Activated CD8-positive, alpha-beta T cell treated with anti-CD3 and anti-CD28 coated beads, Interleukin-2, amount 10 ng/mL, durations not matched to agents 7 days and 5 days (primary cell): ENCODE measurements at regions of chr20 and their contacts with region 1.

Region 1: DNA sequence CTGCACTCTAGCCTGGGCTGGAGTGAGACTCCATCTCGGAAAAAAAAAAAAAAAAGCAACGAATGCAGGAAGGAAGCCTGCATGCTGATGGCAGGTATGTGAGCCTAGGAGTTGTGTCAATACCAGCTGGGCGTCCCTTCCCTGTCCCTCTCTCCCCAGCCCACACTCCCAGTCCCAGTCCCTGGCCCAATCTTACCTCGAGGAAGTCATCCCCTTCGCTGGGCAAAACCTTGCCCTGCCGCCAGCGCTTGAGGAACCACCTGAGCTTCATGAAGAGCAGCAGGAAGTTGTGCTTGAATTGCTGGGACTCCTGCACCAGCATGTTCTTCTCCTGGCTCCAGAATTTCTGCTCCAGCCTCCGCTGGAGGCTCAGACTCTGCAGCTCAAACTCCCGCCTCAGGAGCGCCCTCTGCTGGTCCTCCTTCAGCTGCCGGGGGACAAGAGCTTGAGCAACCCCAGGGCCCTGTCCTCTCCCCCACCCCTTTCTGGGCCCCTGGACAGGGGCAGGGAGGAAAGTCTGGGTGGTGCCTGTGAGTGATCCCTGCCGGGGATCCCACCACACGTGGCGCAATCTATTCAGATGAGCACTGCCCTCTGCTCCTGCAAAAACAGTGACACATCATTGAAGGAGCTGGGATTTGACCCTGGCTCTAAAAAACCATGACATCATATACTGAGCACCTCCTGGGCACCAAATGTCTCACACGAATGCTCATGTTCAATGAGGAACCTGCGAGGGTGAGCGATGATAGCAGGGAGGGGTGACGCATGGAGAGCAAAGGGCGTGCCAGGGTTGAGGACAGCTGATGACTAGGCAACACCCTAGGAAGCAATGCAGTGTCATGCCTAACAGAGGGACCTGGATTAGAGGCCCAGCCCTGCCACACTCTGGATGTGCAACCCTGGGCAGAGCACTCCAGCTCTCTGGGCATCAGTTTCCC is 35.0 kb upstream of the DSN1 start:
- DNase-seq: peak; percentile 81
- ATAC-seq: peak; percentile 81
- H3K4me3 Mint-ChIP-seq: no peak overlapping the region
- H3K27ac Mint-ChIP-seq: no peak overlapping the region
- H3K4me1 Mint-ChIP-seq: peaks cover 14% of the 10 kb centered on the region
- H3K27me3 Mint-ChIP-seq: no peaks in the 10 kb centered on the region

Region 2: GRCh38 chr20:36728986-36729385 is 79.6 kb before region 1 on chr20:
- CTCF ChIA-PET with region 1: interaction called, 10 read pairs
- POLR2A ChIA-PET with region 1: no interaction called
- DNase-seq: peak; percentile 36
- ATAC-seq: peak; percentile 63
- H3K4me3 Mint-ChIP-seq: no peak overlapping the region
- H3K27ac Mint-ChIP-seq: no peak overlapping the region
- H3K4me1 Mint-ChIP-seq: peaks cover 32% of the 10 kb centered on the region
- H3K27me3 Mint-ChIP-seq: no peaks in the 10 kb centered on the region

Region 3: DNA sequence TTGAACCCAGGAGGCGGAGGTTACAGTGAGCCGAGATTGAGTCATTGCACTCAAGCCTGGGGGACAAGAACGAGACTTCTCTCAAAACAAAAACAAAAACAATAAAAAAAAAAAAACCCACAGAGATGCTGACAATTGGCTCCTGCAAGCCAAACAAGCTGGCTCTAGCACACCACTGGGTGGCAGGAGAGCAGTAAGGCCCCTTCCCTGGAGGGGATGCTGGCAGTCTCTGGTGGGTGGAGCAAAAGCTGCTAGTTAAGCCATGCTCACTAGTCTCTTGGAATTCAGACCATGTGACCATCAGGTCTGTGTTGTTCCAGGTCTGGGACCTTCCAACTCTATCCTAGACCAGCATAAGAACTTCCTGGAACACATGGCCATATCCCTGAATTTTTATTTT is 16.2 kb before region 1 on chr20:
- CTCF ChIA-PET with region 1: interaction called, 20 read pairs
- POLR2A ChIA-PET with region 1: no interaction called
- DNase-seq: peak; percentile 35
- ATAC-seq: no peak
- H3K4me3 Mint-ChIP-seq: no peak overlapping the region
- H3K27ac Mint-ChIP-seq: no peak overlapping the region
- H3K4me1 Mint-ChIP-seq: no peaks in the 10 kb centered on the region
- H3K27me3 Mint-ChIP-seq: no peaks in the 10 kb centered on the region

Region 4: DNA sequence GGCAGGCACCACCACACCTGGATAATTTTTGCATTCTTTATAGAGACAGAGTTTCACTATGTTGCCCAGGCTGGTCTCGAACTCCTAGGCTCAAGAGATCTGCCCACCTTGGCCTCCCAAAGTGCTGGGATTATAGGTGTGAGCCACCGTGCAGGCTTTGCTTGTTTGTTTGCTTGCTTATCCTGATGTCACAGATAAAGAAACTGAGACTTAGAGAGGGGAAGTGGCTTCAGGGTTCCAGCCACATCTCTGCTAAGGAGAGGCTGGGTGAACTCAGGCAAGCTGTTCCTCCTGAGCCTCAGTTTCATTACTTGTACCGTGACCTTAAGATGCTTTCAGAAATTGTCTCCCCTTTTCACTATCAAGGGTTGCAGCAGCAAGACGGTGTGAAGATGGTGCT is 18.9 kb after region 1 on chr20:
- CTCF ChIA-PET with region 1: interaction called, 11 read pairs
- POLR2A ChIA-PET with region 1: no interaction called
- DNase-seq: peak; percentile 50
- ATAC-seq: peak; percentile 71
- H3K4me3 Mint-ChIP-seq: peak overlapping the region; percentile 7
- H3K27ac Mint-ChIP-seq: peak overlapping the region; percentile 84
- H3K4me1 Mint-ChIP-seq: peaks cover 37% of the 10 kb centered on the region
- H3K27me3 Mint-ChIP-seq: no peaks in the 10 kb centered on the region

Region 5: DNA sequence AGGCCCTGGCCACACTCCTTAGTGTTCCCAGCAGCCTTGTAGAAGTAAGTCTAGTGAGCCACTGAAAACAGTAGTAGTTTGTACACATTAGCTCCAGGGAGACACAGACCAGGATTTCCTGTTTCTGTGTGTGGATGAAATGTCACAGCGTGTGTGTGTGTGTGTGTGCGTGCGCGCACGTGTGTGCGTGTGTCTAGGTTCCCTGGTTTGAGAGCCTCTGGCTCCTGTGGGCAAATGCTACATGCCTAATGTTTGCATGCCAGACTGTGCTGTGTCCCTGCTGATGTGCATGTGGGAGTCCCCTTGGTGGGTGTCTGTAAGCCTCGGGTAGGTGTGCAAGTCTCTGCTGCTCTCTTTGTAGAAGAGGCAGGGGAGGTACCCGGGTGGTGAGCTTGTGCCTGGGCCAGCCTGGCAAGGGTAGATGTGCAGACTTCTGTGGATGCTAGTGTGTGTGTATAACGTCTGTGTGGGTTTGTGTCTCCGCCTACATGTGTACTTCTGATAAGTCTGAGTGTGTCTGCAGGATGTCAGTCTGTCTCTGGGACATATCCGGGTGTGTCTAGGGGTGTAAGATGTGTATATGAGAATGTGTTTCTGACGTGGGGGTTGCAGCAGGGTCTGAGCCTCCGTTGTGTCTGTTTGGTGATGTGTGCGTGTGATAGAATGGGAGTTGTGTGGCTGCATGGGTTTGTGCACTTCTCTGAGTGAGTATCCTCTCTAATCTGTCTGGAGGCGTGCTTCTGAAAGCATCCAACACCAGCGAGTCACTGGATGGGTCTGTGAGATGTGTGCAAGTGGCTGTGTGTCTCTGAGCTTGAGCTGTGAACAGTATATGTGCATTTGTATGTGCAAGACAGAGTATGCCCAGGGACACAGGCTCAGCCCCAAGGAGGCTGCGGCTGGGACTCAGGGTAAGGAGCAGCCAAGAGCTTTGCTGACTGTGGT is 48.4 kb after region 1 on chr20:
- CTCF ChIA-PET with region 1: interaction called, 17 read pairs
- POLR2A ChIA-PET with region 1: no interaction called
- DNase-seq: peak; percentile 73
- ATAC-seq: peak; percentile 71
- H3K4me3 Mint-ChIP-seq: no peak overlapping the region
- H3K27ac Mint-ChIP-seq: peak overlapping the region; percentile 4
- H3K4me1 Mint-ChIP-seq: peaks cover 17% of the 10 kb centered on the region
- H3K27me3 Mint-ChIP-seq: peaks cover 8% of the 10 kb centered on the region